Activated CD4-positive, alpha-beta memory T cell treated with anti-CD3 and anti-CD28 coated beads, Interleukin-2, amount 10 ng/mL, durations not matched to agents 7 days and 5 days (primary cell): ENCODE measurements at regions of chr21 and their contacts with region 1.

Region 1: GRCh38 chr21:34933609-34934335 is 115.3 kb downstream of the RUNX1 start:
- DNase-seq: no peak
- H3K4me3 Mint-ChIP-seq: peak overlapping the region; percentile 63
- H3K27ac Mint-ChIP-seq: peak overlapping the region; percentile 95
- H3K4me1 Mint-ChIP-seq: peaks cover 79% of the 10 kb centered on the region
- H3K27me3 Mint-ChIP-seq: no peaks in the 10 kb centered on the region

Region 2: DNA sequence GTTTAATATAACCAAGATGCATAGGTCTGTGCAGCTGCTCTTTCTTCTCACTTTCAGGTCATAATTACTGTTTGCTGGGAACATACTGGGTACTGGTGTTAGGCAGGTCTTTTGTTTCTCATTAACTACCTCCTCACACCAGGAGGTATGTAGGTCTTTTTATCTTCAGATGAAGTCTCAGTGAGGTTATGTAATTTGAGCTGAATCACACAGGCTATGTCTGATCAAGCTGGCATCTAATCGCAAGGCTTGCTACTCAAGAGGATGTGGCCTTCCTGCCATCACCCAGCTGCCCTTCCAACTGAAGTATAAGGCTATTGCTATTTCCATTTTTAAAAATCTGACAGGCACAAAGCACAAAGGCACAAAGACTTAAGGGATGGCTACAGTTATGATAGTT is 18.9 kb after region 1 on chr21:
- CTCF ChIA-PET with region 1: interaction called, 3 read pairs
- POLR2A ChIA-PET with region 1: interaction called, 15 read pairs
- DNase-seq: no peak
- H3K4me3 Mint-ChIP-seq: no peak overlapping the region
- H3K27ac Mint-ChIP-seq: no peak overlapping the region
- H3K4me1 Mint-ChIP-seq: peaks cover 54% of the 10 kb centered on the region
- H3K27me3 Mint-ChIP-seq: no peaks in the 10 kb centered on the region

Region 3: DNA sequence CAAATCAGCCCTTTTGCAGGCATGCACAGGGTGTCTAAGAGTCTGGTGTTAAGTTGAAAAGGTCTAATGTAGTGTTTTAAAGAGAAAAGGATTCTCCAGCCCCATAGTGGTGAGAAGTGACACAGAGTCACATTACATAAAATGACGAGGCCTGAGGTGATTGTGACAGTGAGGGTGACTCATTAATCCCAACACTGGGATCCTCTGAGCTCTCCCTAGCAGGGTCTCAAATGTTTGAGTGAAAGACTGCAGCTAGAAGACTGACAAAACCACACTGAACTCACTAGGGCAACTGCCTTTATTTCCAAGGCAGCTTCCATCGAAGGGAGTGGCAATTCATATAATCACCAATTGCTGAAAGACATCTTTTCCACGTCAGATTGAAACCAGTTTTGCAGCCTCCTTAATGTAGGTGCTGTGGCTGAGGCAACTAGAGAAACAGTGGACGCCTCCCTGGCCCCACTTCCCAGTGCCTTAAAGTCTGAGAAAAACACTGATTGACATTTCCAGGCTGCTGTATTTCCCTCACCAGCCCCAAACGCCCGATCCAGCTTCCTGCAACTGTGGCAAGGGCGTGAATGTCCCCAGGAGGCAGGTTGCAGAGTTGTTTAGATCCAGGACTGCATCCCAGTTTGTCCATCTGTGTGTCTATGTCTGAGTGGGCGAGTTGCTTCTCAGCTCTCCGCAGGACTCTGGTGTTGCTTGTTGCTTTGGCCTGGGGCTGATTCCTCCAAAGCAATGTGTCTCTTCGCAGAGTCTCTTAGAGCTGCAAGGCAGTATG is 33.9 kb after region 1 on chr21:
- CTCF ChIA-PET with region 1: interaction called, 4 read pairs
- POLR2A ChIA-PET with region 1: interaction called, 28 read pairs
- DNase-seq: peak; percentile 55
- H3K4me3 Mint-ChIP-seq: peak overlapping the region; percentile 51
- H3K27ac Mint-ChIP-seq: peak overlapping the region; percentile 94
- H3K4me1 Mint-ChIP-seq: peaks cover 89% of the 10 kb centered on the region
- H3K27me3 Mint-ChIP-seq: peaks cover 4% of the 10 kb centered on the region

Region 4: DNA sequence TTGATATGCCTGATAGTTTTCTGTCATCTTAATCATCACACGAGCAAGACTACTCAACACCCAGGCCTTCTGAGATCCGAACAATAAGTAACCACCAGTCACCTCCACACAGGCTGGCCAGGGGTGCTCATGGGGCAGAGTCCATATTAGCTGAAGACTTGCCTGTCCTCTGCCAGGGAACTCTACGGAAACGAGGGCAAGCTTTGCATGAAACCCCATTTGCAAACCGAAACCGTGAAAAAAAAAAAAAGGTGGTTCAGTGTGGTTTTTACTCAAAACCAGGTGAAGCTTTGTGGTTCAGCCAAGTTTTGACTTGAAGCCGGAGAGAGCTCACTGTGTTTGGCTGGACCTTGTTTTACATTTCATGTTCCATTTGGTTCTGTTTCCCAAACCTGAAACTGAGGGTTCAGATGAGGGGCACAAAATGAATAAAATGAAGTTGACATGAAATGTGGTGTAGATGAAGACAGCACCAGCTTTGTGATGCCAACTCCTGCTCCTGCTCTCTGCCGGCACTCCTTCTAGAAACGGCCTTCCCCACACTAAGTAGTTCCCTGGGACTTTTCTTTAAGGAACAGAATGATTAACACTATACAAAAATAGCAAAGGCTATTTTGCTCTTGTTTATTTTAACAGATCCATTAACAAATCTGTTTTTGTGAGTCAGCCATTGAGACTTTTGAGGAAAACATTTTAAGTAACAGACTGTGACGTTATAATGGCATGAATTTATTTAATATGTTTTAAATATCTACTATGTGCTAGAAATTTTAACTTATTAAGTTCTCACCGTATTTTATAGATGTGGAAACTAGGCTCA is 40.6 kb after region 1 on chr21:
- CTCF ChIA-PET with region 1: interaction called, 3 read pairs
- POLR2A ChIA-PET with region 1: interaction called, 28 read pairs
- DNase-seq: peak; percentile 64
- H3K4me3 Mint-ChIP-seq: peak overlapping the region; percentile 60
- H3K27ac Mint-ChIP-seq: peak overlapping the region; percentile 80
- H3K4me1 Mint-ChIP-seq: peaks cover 78% of the 10 kb centered on the region
- H3K27me3 Mint-ChIP-seq: peaks cover 9% of the 10 kb centered on the region